ENCODE measurements at regions of chr3 and their contacts with region 1.

Region 1: DNA sequence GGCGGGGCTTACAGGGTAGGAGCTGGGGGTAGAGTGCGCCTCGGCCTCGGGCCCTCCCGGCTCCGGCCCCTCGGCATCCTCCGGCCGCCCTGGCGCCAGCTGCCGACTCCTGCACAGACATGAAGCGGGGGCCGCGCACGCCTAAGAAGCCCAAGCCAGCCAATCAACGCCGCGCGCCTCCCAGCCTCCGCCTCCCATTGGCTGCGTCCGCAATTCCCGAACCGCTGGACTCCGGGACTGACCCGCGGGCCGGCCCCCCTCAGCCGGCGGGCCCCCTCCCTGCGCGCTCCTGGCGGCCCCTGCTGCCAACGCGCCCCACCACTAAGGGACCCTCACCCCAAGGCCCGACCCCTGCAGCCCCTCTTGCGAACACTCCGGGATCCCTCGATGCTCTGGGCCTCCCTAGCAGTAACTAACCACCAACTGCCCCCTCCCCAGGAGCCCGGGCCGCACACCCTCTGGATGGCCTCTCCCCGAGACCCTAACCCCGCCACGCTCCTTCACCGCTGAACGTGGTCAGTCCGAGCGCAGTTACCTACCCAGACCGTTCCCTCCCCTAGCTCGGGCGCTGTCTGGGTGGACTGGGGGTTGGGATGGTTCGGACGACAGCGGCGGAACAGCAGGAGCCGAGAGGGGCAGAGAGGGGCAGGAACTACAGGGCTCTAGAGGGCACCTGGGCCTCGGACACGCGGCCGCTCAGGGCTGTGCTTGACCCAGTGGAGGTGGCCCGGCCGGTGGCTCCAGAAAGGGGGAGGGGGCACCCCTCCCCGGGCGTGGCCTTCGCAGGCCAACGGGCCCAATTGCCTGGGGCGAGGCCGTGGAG is 5.0 kb downstream of the GATA2 start:
- DNase-seq: peak; percentile 72
- ATAC-seq: peak; percentile 86
- H3K4me3 ChIP-seq: peak overlapping the region; percentile 75 to 76
- H3K27ac ChIP-seq: peak overlapping the region; percentile 82
- H3K4me1 ChIP-seq: peaks cover 7 to 27% of the 10 kb centered on the region in 2 experiments
- H3K27me3 ChIP-seq: no peaks in the 10 kb centered on the region
- CTCF ChIP-seq: no peak
- POLR2A ChIP-seq: peak; percentile 46
- RAD21 ChIP-seq: no peak

Region 2: GRCh38 chr3:128416578-128417211 is 71.3 kb before region 1 on chr3:
- CTCF ChIA-PET with region 1: no interaction called
- POLR2A ChIA-PET with region 1: no interaction called
- RAD21 ChIA-PET with region 1: no interaction called
- intact Hi-C with region 1: loop called (anchors 5 kb)
- DNase-seq: peak; percentile 92
- ATAC-seq: peak; percentile 92
- H3K4me3 ChIP-seq: peak overlapping the region in 1 of 2 experiments; percentile 32; a peak in 3 of 4 replicates
- H3K27ac ChIP-seq: peak overlapping the region; percentile 43; the same call in 1 of the 2 replicates
- H3K4me1 ChIP-seq: peaks cover 34 to 49% of the 10 kb centered on the region in 2 experiments
- H3K27me3 ChIP-seq: peaks cover 20% of the 10 kb centered on the region; the same call in 1 of the 2 replicates
- CTCF ChIP-seq: no peak
- POLR2A ChIP-seq: no peak
- RAD21 ChIP-seq: no peak